Endothelial cell of umbilical vein (primary cell): ENCODE measurements at regions of chr7 and their contacts with region 1.

Region 1: DNA sequence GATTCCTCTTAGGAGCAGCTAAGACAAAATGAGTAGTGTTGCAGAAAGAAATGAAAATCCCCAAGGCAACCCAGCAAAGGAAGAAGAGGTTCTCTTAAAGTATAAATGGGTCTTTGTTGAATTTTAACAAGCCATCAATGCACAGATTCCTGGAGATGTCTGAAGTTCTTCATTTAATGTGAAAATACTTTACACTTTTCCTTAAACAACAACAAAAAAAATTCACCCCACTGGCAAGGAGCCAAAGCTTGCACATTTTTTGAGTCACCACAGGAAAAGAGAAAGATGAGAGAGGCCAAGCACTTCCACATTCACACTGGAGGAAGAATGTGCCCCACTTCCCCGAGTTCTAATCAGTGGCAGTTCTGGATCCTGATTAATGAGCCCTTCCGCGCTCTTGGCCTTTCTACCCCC is 286.4 kb upstream of the MEOX2 start:
- DNase-seq: peak; percentile 87
- H3K4me3 ChIP-seq: no peak overlapping the region
- H3K27ac ChIP-seq: no peak overlapping the region
- H3K4me1 ChIP-seq: peaks cover 23% of the 10 kb centered on the region
- H3K27me3 ChIP-seq: no peaks in the 10 kb centered on the region
- CTCF ChIP-seq: no peak
- POLR2A ChIP-seq: no peak

Region 2: DNA sequence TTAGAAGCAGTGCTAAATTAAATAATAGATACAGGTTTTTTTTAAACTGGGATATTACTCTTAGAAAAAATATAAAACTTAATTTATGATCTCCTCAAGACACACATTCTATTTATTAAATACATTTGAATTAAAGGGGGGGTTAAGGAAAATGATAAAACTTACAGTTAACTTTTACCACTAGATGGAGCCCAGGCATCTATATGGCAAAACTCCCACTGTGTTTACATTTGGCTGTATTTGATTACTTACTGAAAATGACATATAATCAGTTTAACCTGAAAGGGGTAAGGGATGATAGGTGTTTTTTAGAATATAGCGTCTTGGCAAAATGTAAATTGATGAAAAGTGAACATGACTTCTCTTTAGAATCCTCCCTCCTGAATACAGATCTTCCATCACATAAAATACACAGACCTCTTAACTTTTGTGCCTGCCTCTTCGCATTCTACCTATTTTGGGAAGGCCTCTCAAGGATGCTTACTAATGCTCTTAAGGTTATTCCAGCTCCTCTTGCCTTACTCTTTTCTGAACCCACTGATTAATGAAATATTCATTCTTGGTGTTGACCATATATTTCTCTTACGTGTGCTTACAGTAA is 646.7 kb before region 1 on chr7:
- CTCF ChIA-PET with region 1: no interaction called
- POLR2A ChIA-PET with region 1: no interaction called
- dilution Hi-C with region 1: no loop called
- intact Hi-C with region 1: loop called (anchors 10 kb)
- DNase-seq: peak; percentile 72
- H3K4me3 ChIP-seq: no peak overlapping the region
- H3K27ac ChIP-seq: no peak overlapping the region
- H3K4me1 ChIP-seq: no peaks in the 10 kb centered on the region
- H3K27me3 ChIP-seq: no peaks in the 10 kb centered on the region
- CTCF ChIP-seq: peak; percentile 33 to 45
- POLR2A ChIP-seq: no peak

Region 3: DNA sequence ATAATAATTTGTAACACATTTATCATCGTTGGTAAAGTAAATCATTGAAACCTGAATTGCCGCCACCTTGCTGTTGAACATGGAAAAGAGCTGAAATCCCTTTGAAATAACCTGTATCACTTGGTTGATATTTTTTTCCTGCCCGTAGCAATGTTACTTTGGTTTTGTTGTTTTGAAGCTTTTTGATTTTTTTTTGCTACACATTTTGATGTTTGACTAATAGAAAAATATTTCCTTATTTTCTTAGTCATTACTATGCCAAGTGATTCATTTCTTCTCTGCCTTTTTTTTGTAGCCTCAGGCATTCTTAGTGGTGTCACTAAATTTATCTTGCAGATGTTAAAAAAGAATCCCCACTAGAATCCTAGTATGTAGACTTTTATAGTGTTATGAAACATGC is 51.3 kb before region 1 on chr7:
- CTCF ChIA-PET with region 1: interaction called, 4 read pairs
- POLR2A ChIA-PET with region 1: no interaction called
- dilution Hi-C with region 1: no loop called
- intact Hi-C with region 1: loop called (anchors 2 kb)
- DNase-seq: peak; percentile 59
- H3K4me3 ChIP-seq: peak overlapping the region in 2 of 3 experiments; percentile 28 to 40
- H3K27ac ChIP-seq: peak overlapping the region; percentile 26
- H3K4me1 ChIP-seq: peaks cover 13% of the 10 kb centered on the region
- H3K27me3 ChIP-seq: no peaks in the 10 kb centered on the region
- CTCF ChIP-seq: peak in 1 of 2 donors; percentile 1
- POLR2A ChIP-seq: no peak